ENCODE measurements at regions of chr11 and their contacts with region 1.

Region 1: DNA sequence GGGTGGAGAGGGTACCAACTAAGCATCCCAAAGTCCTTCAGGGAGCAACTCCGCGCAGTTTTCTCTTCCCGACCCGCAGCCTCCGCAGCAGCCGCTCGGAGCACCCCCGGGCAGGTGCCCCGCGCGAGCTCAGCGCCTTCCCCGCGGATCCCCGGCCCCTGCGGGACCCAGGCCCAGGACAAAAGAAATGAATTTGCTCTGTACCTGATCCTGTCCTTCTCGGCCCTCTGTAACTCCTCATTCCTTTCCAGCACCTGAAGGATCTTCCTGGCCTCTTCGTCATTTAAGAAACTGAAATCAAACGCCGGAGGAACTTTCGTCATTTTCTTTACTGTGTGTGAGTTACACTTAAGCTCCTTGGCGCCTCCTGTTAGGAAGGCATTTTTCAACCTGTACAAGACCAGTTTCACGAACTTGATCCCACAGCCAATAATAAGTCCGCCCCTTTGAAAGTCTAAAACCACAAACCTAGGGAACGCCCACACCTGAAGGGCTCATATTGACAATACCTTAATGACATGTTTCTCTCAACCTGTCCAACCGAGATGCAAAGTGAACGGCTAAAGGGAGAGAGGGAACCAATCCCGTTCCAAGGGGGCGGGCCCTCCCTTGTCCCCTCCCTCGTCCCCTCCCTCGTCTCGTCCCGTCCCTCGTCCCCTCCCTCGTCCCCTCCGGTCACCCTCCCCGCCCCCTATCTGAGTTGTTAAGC is at the start of gene EXPH5:
- DNase-seq: peak; percentile 96 to 98 (median 98)
- ATAC-seq: peak; percentile 95
- H3K4me3 ChIP-seq: peak within 1 kb of the TSS; percentile 77
- H3K27ac ChIP-seq: peak within 1 kb of the TSS; percentile 91
- H3K4me1 ChIP-seq: peaks cover 11 to 30% of the 10 kb centered on the region in 2 experiments; a peak in 4 of 5 replicates
- H3K27me3 ChIP-seq: no peaks in the 10 kb centered on the region
- CTCF ChIP-seq: peak in 2 of 3 experiments; percentile 17 to 22; a peak in 1 of 6 replicates
- EP300 ChIP-seq: no peak
- POLR2A ChIP-seq: peak; percentile 81
- RAD21 ChIP-seq: 0 out of 4 replicates have a peak, but pooled peaks of 1 of the 2 experiments have one; percentile 4
- polyA plus RNA-seq, gene EXPH5: 1.3 to 4.8 TPM

Region 2: GRCh38 chr11:108093128-108093904 is 500.1 kb before region 1 on chr11:
- CTCF ChIA-PET with region 1: no interaction called
- POLR2A ChIA-PET with region 1: no interaction called
- in situ Hi-C with region 1: no loop called
- intact Hi-C with region 1: no loop called
- DNase-seq: no peak
- ATAC-seq: no peak
- H3K4me3 ChIP-seq: no peak overlapping the region
- H3K27ac ChIP-seq: no peak overlapping the region
- H3K4me1 ChIP-seq: no peaks in the 10 kb centered on the region
- H3K27me3 ChIP-seq: no peaks in the 10 kb centered on the region
- CTCF ChIP-seq: no peak
- EP300 ChIP-seq: no peak
- POLR2A ChIP-seq: no peak
- RAD21 ChIP-seq: no peak

Region 3: DNA sequence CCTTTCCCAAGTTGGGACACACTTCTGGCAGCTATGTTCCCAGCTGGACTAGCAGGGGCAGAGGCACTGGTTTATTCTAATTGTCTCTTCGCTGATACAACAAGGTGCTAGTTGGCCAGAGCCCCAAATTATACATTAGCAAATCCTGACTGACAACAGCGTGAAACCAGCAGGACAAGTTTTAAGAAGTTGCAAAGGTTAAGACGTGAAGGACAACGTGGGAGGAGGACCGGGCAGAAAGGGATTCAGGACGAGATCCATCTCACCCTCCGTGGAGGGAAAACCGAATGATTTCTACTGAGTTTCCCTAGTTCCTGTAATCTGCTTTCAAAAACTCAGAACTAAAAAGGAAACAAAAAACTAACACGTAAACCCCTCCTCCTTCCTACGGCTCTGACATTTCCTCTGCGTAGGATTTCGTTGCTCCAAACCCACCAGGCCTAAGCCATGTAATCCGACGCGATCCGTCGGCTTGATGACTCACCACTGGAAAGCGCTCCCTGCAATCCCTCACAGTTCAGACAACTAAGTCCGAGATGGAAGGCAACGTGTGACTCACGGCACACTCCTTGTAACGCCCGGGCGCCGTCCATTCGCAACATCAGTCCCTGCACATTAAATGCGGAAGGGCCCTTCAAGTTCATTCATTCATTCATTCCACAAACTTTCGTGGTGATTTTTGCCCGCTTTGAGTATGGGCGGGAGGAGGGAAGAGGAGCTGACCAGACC is 95.9 kb before region 1 on chr11:
- CTCF ChIA-PET with region 1: no interaction called
- POLR2A ChIA-PET with region 1: no interaction called
- in situ Hi-C with region 1: no loop called
- intact Hi-C with region 1: loop called (anchors 5 kb)
- DNase-seq: peak; percentile 73 to 97 (median 81)
- ATAC-seq: peak; percentile 88
- H3K4me3 ChIP-seq: peak overlapping the region; percentile 59
- H3K27ac ChIP-seq: peak overlapping the region; percentile 97
- H3K4me1 ChIP-seq: peaks cover 17 to 37% of the 10 kb centered on the region in 2 experiments
- H3K27me3 ChIP-seq: no peaks in the 10 kb centered on the region
- CTCF ChIP-seq: no peak
- EP300 ChIP-seq: peak; percentile 59; the same call in 1 of the 2 replicates
- POLR2A ChIP-seq: peak; percentile 95
- RAD21 ChIP-seq: no peak

Region 4: GRCh38 chr11:108551651-108552462 is 41.5 kb before region 1 on chr11:
- CTCF ChIA-PET with region 1: no interaction called
- POLR2A ChIA-PET with region 1: interaction called, 8 read pairs
- in situ Hi-C with region 1: no loop called
- intact Hi-C with region 1: loop called (anchors 2 kb)
- DNase-seq: peak; percentile 74 to 92 (median 81)
- ATAC-seq: peak; percentile 94
- H3K4me3 ChIP-seq: peak overlapping the region; percentile 1; the same call in 1 of the 2 replicates
- H3K27ac ChIP-seq: peak overlapping the region; percentile 62
- H3K4me1 ChIP-seq: peaks cover 13 to 46% of the 10 kb centered on the region in 2 experiments; a peak in 4 of 5 replicates
- H3K27me3 ChIP-seq: no peaks in the 10 kb centered on the region
- CTCF ChIP-seq: no peak
- EP300 ChIP-seq: peak; percentile 84
- POLR2A ChIP-seq: no peak
- RAD21 ChIP-seq: no peak; a peak in 1 of 4 replicates

Measured in K562 (cell line).